ENCODE measurements at regions of chr4 and their contacts with region 1.

Region 1: GRCh38 chr4:153791746-153792617 is 3.1 kb upstream of the SFRP2 start:
- DNase-seq: no peak
- H3K4me3 Mint-ChIP-seq: no peak overlapping the region
- H3K27ac Mint-ChIP-seq: no peak overlapping the region
- H3K4me1 Mint-ChIP-seq: peaks cover 16% of the 10 kb centered on the region
- H3K27me3 Mint-ChIP-seq: peaks cover 89% of the 10 kb centered on the region

Region 2: GRCh38 chr4:152729466-152729865 is 1062.5 kb before region 1 on chr4:
- intact Hi-C with region 1: no loop called
- DNase-seq: no peak
- H3K4me3 Mint-ChIP-seq: no peak overlapping the region
- H3K27ac Mint-ChIP-seq: no peak overlapping the region
- H3K4me1 Mint-ChIP-seq: no peaks in the 10 kb centered on the region
- H3K27me3 Mint-ChIP-seq: peaks cover 9% of the 10 kb centered on the region

Region 3: GRCh38 chr4:153822316-153822715 is 30.3 kb after region 1 on chr4:
- intact Hi-C with region 1: no loop called
- DNase-seq: no peak
- H3K4me3 Mint-ChIP-seq: no peak overlapping the region
- H3K27ac Mint-ChIP-seq: no peak overlapping the region
- H3K4me1 Mint-ChIP-seq: no peaks in the 10 kb centered on the region
- H3K27me3 Mint-ChIP-seq: peaks cover 10% of the 10 kb centered on the region

Region 4: DNA sequence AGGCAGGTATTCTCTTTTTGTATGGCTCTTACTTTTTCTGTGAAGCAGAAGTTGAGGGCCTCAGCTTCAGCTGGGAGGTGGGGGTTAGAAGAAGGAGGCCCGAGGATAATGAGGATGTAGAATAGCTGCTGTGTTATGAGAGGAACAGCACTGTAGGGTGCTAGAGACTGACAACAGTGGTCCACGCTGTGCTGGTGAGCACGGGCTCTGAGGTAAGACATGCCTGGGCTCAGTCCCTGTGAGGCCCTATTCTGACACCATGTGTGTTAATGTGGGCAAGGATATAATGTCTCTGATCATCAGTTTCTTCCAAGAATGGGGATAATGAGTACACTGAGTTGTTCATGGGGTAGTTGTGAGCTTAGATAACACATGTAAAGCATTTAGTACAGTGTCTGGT is 52.2 kb after region 1 on chr4:
- intact Hi-C with region 1: no loop called
- DNase-seq: no peak
- H3K4me3 Mint-ChIP-seq: no peak overlapping the region
- H3K27ac Mint-ChIP-seq: no peak overlapping the region
- H3K4me1 Mint-ChIP-seq: no peaks in the 10 kb centered on the region
- H3K27me3 Mint-ChIP-seq: peaks cover 2% of the 10 kb centered on the region

Region 5: DNA sequence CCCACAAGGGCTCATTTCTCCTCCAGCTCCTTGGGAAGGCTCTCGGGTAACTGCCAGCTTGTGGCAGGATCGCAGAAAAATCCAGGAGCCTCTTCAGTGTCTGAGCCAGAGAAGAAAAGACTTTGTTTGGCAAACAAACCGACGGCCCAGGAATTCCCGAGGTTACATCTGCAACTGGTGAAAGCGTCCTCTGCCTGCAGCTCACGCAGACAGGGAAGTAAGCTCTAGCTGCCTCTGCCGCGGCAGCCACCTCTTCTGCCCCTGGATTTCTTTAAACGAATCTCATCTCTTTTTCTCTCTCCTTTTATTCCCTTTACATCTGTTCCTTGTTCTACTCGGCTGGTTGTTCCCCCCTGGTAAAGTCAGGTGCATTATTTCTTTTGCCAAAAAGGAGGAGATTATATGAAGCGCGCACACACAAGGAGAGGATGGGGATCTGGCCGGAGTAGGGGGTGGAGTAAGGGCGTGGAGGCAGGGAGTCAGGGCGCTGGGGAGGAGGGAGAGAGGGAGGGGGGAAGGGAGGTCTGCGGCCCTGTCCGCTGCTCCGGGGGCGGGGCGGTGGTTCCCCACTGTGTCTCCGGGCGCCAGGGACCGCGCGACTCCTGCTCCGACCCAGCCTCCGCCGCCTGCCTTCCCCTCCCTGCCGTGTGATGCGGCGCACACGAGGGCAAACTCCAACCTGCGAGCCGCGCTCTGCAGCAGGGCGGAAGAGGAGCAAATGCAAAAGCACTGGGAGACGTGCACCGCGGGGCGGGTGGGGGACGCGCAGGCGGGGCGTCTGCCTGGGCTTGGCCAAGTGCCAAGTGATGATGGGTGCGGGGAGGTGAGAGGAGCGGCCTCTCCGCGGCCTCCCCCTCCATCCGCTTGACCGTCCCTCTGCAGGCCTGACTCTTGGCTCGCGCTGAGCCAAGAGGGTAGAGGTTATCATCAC is 699.6 kb after region 1 on chr4 and contains the start of gene DCHS2:
- intact Hi-C with region 1: loop called (anchors 2 kb)
- DNase-seq: no peak
- H3K4me3 Mint-ChIP-seq: peak within 1 kb of the TSS; percentile 55
- H3K27ac Mint-ChIP-seq: no peak within 1 kb of the TSS
- H3K4me1 Mint-ChIP-seq: peaks cover 12% of the 10 kb centered on the region
- H3K27me3 Mint-ChIP-seq: peaks cover 63% of the 10 kb centered on the region
- total RNA-seq, gene DCHS2: not detected in 2 replicates

Region 6: DNA sequence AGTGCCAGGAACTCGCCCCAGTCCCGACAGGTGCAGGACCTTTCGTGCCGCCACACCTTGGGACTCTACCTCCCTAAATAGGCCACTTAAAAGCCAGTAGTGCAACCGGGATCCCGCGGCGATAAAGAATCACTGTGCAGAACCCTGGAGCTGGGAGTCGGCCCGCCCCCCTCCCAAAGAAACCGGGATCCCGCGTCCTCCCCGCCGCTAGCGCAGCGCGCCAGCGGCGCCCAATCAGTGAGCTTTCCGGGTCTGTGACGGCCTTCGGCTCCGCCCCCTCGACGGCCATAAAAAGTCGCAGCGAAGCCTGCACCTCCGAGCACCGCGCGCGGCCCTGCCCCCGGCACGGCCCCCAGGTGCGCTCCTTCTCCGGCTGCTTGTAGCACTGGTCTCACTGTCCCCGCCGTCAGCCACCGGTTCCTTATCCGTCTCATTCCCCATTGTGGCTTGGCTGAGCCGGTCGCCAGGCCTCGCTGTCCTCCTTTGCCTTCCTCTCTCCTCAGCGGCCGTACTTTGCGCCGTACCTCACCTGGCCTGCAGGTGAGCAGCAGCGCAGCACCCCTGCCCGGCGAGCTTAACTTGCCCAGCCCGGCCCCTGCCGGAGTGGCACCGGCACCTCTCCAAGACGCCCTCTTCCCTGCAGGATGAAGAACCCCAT is 951.8 kb after region 1 on chr4 and contains the start of gene LRAT:
- intact Hi-C with region 1: loop called (anchors 5 kb)
- DNase-seq: peak; percentile 46
- H3K4me3 Mint-ChIP-seq: peak within 1 kb of the TSS; percentile 82
- H3K27ac Mint-ChIP-seq: no peak within 1 kb of the TSS
- H3K4me1 Mint-ChIP-seq: peaks cover 20% of the 10 kb centered on the region
- H3K27me3 Mint-ChIP-seq: peaks cover 70% of the 10 kb centered on the region
- total RNA-seq, gene LRAT: 0.07 TPM in 1 of 2 replicates, not detected in the other

Region 7: GRCh38 chr4:155032521-155033229 is 1240.7 kb after region 1 on chr4:
- intact Hi-C with region 1: no loop called
- DNase-seq: no peak
- H3K4me3 Mint-ChIP-seq: no peak overlapping the region
- H3K27ac Mint-ChIP-seq: no peak overlapping the region
- H3K4me1 Mint-ChIP-seq: no peaks in the 10 kb centered on the region
- H3K27me3 Mint-ChIP-seq: no peaks in the 10 kb centered on the region